ENCODE measurements at regions of chrX and their contacts with region 1.

Region 1: DNA sequence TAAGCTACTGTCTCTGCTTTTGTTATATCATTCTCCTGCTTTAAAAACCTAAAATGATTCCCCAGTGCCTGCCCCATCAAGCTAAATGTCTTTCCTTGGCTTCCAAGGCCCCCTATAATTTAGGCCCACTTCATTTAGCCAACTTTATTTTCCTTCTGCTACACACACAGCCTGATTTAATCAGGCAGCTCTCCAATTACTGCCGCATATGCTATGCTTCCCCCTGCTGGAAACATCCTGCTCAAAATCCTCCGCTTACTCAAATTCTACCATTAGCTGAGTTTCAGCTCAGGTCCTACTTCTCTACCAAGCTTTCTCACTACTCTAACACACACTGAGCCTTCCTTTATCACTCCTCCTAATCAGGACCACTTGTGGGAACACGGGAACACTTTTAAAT is 17.0 kb downstream of the LAMP2 start:
- DNase-seq: peak; percentile 46 to 75 (median 72)
- H3K4me3 ChIP-seq: no peak overlapping the region
- H3K27ac ChIP-seq: no peak overlapping the region
- H3K4me1 ChIP-seq: peaks cover 3 to 20% (median 14%) of the 10 kb centered on the region in 4 experiments
- H3K27me3 ChIP-seq: no peaks in the 10 kb centered on the region

Region 2: DNA sequence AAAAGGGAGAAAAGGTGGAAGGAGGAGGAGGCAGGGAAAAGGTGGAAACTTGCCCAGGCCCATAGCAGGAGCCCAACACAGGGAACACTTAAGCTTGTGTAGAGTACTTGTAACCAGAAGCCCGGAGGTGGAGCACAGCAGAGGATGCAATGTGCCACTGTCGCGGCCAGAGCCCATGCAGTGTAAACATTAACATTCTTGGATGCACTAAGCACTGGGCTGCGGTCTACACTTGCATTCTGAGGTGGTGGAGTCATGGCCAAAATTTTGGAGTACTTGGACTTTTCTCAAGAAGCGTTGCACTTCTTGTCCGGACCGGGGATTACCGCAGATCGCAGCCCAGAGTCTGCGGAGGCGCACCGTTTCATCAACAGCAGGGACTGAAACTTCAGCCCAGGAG is 331.9 kb before region 1 on chrX:
- CTCF ChIA-PET with region 1: no interaction called
- POLR2A ChIA-PET with region 1: no interaction called
- DNase-seq: no peak
- H3K4me3 ChIP-seq: no peak overlapping the region
- H3K27ac ChIP-seq: no peak overlapping the region
- H3K4me1 ChIP-seq: peaks cover 0 to 7% (median 0%) of the 10 kb centered on the region in 4 experiments
- H3K27me3 ChIP-seq: peaks cover 0 to 5% (median 0%) of the 10 kb centered on the region in 5 experiments

Region 3: GRCh38 chrX:120380699-120381098 is 71.4 kb before region 1 on chrX:
- CTCF ChIA-PET with region 1: interaction called, 39 read pairs
- POLR2A ChIA-PET with region 1: no interaction called
- DNase-seq: peak; percentile 51 to 77 (median 75)
- H3K4me3 ChIP-seq: no peak overlapping the region
- H3K27ac ChIP-seq: no peak overlapping the region
- H3K4me1 ChIP-seq: no peaks in the 10 kb centered on the region
- H3K27me3 ChIP-seq: peaks cover 0 to 11% (median 0%) of the 10 kb centered on the region in 5 experiments

Region 4: GRCh38 chrX:120428309-120428708 is 23.8 kb before region 1 on chrX:
- CTCF ChIA-PET with region 1: interaction called, 15 read pairs
- POLR2A ChIA-PET with region 1: interaction called, 3 read pairs
- DNase-seq: peak in 2 of 3 donors; percentile 35 to 45
- H3K4me3 ChIP-seq: no peak overlapping the region
- H3K27ac ChIP-seq: no peak overlapping the region
- H3K4me1 ChIP-seq: peaks cover 0 to 7% (median 0%) of the 10 kb centered on the region in 4 experiments
- H3K27me3 ChIP-seq: peaks cover 0 to 4% (median 0%) of the 10 kb centered on the region in 5 experiments

Region 5: GRCh38 chrX:120439921-120440320 is 12.2 kb before region 1 on chrX:
- CTCF ChIA-PET with region 1: interaction called, 18 read pairs
- POLR2A ChIA-PET with region 1: interaction called, 4 read pairs
- DNase-seq: no peak
- H3K4me3 ChIP-seq: no peak overlapping the region
- H3K27ac ChIP-seq: no peak overlapping the region
- H3K4me1 ChIP-seq: no peaks in the 10 kb centered on the region
- H3K27me3 ChIP-seq: no peaks in the 10 kb centered on the region

Region 6: DNA sequence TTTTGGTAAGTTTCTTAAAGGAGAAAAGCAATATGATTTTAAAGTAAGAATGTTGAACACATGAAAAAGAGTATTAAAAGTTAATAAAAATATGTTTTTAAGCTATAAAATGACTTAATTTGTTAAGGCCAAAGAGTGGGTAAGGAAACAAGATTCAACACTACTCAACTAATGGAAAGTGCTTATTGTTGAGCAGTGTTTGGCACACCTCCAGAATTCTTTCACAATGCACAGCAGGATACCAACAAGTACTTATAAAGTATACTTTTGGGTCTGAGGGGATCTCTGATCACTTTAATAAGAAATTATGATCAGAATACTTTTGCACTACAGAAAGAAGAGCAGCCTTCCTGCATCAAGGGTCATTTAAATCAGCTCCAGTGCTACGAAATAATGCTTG is 11.1 kb after region 1 on chrX:
- CTCF ChIA-PET with region 1: interaction called, 16 read pairs
- POLR2A ChIA-PET with region 1: no interaction called
- DNase-seq: peak in 2 of 3 donors; percentile 54 to 57
- H3K4me3 ChIP-seq: peak overlapping the region in 2 of 7 experiments; percentile 12 to 42
- H3K27ac ChIP-seq: peak overlapping the region in 1 of 2 experiments; percentile 52
- H3K4me1 ChIP-seq: peaks cover 30 to 75% (median 43%) of the 10 kb centered on the region in 4 experiments
- H3K27me3 ChIP-seq: no peaks in the 10 kb centered on the region

Region 7: DNA sequence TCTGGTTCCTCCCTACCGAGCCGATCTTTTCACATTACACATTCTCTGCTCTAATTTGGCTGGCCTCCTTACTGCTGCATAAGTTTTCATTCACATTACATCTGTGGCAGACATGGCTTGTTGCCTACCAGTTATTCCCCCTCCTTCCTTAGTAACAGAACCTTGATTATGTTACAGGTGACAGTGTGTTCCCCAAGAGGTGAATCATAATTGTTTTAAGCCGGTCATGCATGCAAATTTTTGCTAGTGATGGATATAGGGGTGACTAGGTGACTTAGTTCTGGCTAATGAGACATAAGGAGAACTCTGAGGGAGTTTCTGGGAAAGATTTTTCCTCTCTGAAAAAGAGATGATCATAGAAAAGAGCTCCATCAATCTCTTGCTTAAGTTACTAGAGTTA is 25.3 kb after region 1 on chrX:
- CTCF ChIA-PET with region 1: interaction called, 31 read pairs
- POLR2A ChIA-PET with region 1: no interaction called
- DNase-seq: no peak
- H3K4me3 ChIP-seq: no peak overlapping the region
- H3K27ac ChIP-seq: no peak overlapping the region
- H3K4me1 ChIP-seq: no peaks in the 10 kb centered on the region
- H3K27me3 ChIP-seq: peaks cover 0 to 8% (median 0%) of the 10 kb centered on the region in 5 experiments

Region 8: GRCh38 chrX:120504594-120504993 is 52.5 kb after region 1 on chrX:
- CTCF ChIA-PET with region 1: no interaction called
- POLR2A ChIA-PET with region 1: no interaction called
- DNase-seq: no peak
- H3K4me3 ChIP-seq: no peak overlapping the region
- H3K27ac ChIP-seq: no peak overlapping the region
- H3K4me1 ChIP-seq: peaks cover 0 to 2% (median 0%) of the 10 kb centered on the region in 4 experiments
- H3K27me3 ChIP-seq: peaks cover 0 to 2% (median 0%) of the 10 kb centered on the region in 5 experiments